ENCODE measurements at regions of chr13 and their contacts with region 1.

Region 1: GRCh38 chr13:46184277-46184699 is 2.3 kb upstream of the LCP1 start:
- DNase-seq: peak; percentile 85
- H3K4me3 Mint-ChIP-seq: peak overlapping the region; percentile 96
- H3K27ac Mint-ChIP-seq: peak overlapping the region; percentile 99
- H3K4me1 Mint-ChIP-seq: peaks cover 39% of the 10 kb centered on the region
- H3K27me3 Mint-ChIP-seq: no peaks in the 10 kb centered on the region

Region 2: DNA sequence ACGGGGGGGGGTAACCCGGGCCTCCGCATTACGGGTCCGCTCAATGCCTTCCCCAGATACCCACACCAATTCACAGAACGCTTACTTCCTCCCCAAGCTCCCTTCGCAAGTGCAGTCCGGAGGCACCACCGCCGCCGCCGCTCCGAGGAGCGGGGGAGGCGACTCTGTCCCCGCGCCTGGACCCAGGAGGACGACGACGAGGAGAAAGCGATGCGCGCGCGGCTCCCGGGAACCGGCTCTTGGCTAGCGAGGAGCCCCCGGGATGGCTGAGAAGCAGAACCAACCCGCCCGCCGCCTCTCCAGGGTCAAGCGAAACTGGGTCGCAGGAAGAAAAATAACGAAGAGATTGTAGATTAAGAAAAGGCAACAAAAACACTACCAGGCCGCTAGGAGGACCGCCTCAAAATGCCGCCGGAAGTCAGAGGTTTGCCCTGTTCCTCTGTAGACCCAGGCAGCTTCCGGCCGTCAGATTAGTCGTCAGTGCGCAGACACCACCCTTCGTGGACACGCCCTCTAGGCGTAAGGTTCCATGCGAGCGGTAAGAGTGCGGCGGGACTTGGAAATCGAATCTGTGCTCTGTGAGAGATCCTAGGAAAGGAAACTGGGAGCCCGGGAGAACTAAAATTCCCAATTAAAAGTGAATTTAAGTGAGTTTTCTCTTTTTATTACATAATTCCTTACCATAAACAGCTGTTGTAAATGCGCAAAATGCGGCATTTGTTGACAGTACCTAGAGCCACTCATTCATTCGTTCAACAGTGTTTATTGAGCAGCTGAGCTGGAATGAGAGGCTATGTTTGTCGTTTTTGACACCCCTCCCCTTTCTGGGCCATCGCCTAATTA is 131.7 kb before region 1 on chr13 and contains the start of gene ZC3H13:
- CTCF ChIA-PET with region 1: no interaction called
- POLR2A ChIA-PET with region 1: interaction called, 11 read pairs
- DNase-seq: peak; percentile 96
- H3K4me3 Mint-ChIP-seq: peak within 1 kb of the TSS; percentile 92
- H3K27ac Mint-ChIP-seq: peak within 1 kb of the TSS; percentile 89
- H3K4me1 Mint-ChIP-seq: peaks cover 44% of the 10 kb centered on the region
- H3K27me3 Mint-ChIP-seq: peaks cover 15% of the 10 kb centered on the region
- total RNA-seq, gene ZC3H13: 34.1 to 37.7 TPM

Region 3: GRCh38 chr13:46202188-46202795 is 18.0 kb after region 1 on chr13:
- CTCF ChIA-PET with region 1: interaction called, 10 read pairs
- POLR2A ChIA-PET with region 1: interaction called, 8 read pairs
- DNase-seq: no peak
- H3K4me3 Mint-ChIP-seq: no peak overlapping the region
- H3K27ac Mint-ChIP-seq: peak overlapping the region; percentile 80
- H3K4me1 Mint-ChIP-seq: peaks cover 49% of the 10 kb centered on the region
- H3K27me3 Mint-ChIP-seq: no peaks in the 10 kb centered on the region

Region 4: DNA sequence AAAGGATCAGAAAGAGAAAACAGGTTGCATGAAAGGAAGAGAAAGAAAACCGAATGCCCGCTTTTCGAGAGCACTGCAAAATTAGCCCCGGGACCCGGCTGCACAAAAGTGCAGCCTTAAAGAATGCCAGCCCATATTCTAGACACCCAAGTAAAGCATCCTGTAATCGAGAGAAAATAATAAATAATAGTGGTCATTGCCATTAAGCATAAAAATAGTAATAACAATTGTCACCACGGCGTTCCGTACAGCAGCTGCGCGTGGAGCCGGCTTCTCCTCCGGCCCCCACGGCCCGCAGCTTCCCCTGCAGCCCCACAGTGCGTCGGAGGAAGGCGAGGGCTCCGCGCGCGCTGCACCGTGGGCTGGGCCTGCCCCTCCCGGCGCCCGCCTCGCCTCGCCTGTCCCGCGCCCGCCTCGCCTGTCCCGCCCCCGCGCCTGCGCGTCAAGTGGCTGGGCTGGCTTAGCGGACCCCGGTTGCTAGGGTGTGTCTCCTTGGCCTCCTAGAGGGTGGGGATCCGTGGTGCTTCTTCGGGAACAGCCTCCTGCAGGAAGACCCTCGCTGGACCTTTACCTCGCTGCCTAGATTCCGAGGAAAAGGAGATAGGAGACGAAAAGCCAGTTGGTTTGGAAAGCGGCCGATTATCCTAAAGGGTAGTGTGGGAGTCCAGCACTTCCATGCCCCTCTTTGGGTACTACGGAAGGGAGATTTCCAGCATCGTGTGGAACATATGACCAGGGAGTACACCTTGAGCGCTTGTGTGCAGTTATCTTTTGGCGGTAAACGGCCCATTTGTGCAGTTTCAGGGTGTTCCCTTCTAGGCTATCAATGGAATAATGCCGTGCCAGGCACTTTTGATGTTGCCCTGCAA is 27.4 kb after region 1 on chr13 and contains the start of gene LRRC63:
- CTCF ChIA-PET with region 1: interaction called, 3 read pairs
- POLR2A ChIA-PET with region 1: interaction called, 23 read pairs
- DNase-seq: peak; percentile 89
- H3K4me3 Mint-ChIP-seq: peak within 1 kb of the TSS; percentile 93
- H3K27ac Mint-ChIP-seq: peak within 1 kb of the TSS; percentile 87
- H3K4me1 Mint-ChIP-seq: peaks cover 33% of the 10 kb centered on the region
- H3K27me3 Mint-ChIP-seq: no peaks in the 10 kb centered on the region
- total RNA-seq, gene LRRC63: 0.83 to 1.1 TPM

Region 5: GRCh38 chr13:46295491-46296114 is 111.3 kb after region 1 on chr13:
- CTCF ChIA-PET with region 1: interaction called, 6 read pairs
- POLR2A ChIA-PET with region 1: interaction called, 19 read pairs
- DNase-seq: peak; percentile 82
- H3K4me3 Mint-ChIP-seq: peak overlapping the region; percentile 59
- H3K27ac Mint-ChIP-seq: peak overlapping the region; percentile 98
- H3K4me1 Mint-ChIP-seq: peaks cover 41% of the 10 kb centered on the region
- H3K27me3 Mint-ChIP-seq: no peaks in the 10 kb centered on the region